Endothelial cell of umbilical vein (primary cell): ENCODE measurements at regions of chr12 and their contacts with region 1.

Region 1: DNA sequence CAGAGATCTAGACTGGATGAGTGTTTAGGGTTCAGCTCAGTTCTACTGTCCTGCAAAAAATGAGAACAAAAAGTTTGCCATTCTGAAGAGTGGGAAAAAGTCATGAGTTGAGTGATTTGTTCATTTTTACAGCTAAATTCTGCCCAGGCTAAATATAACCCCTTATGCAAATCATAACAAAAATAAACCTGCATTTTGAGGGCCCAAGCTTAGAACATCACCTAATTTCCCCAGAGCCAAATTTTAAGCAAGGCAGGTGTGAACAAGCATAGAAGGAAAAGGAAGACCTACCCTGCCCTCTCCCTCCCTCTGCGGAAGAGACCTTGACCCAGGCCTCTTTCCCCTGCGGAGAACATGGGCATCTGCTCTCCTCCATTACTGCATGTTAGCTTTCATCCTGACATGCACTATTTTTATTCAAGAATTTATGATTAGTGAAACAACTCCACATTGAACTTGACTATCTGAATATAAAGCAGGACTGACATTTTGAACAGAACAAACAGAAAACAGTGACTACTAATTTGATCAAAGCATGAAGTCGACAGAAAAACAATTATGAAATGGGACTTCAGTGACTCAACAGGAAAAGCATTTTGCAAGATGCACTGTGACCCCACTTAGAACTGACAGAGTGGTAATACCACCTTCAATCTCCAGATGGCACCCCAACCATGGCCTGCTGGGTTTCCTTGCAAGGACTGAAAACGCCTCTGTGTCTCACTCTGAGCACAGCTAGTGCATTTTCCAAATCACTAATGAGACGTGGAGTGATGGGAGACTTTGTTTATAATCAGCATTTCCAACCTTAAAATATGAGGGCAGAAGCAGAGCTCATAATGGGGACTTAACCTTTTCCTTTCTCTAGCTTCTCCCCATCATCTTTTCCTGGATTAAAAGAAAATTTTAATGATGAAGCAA is 30.9 kb upstream of the SELPLG start:
- DNase-seq: peak; percentile 99
- H3K4me3 ChIP-seq: peak overlapping the region in 1 of 3 experiments; percentile 45
- H3K27ac ChIP-seq: peak overlapping the region; percentile 82
- H3K4me1 ChIP-seq: peaks cover 20% of the 10 kb centered on the region
- H3K27me3 ChIP-seq: no peaks in the 10 kb centered on the region
- CTCF ChIP-seq: peak; percentile 84 to 93
- POLR2A ChIP-seq: no peak

Region 2: DNA sequence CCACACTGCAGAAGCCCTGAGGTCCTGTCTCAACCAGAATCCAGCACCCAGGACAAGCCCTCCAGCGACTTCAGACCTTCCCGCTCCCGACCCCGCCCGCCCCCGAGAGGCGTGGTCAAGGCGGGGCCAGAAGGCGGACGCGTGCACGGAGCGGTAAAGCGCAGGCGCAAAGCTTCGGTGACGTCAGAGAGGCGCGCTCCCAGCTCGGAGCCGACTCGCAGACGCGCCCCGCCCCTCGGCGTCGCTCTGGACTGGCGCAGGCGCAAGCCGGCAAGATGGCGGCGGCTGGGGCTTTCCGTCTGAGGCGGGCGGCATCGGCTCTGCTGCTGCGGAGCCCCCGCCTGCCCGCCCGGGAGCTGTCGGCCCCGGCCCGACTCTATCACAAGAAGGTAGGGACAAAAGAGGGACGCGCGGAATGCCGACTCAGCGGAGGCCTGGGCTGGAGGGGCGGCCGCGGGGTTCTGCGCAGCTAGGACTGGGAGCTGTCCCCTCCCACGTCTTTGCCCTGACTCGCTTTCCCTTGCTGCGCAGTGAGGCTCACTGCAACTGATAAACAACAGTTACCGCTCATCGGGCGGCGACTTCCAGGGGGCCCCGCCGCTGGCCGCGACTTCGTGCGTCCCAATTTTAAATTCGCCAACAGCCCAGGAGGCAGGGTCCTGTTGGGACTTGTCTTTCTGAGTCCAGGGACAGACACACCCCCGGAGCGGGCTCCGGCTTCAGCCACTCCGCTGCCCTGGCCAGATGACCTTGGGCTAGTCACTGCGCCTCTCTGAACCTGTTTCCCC is 102.1 kb before region 1 on chr12 and contains the start of gene ISCU:
- CTCF ChIA-PET with region 1: interaction called, 5 read pairs
- POLR2A ChIA-PET with region 1: no interaction called
- dilution Hi-C with region 1: no loop called
- intact Hi-C with region 1: loop called (anchors 1 kb)
- DNase-seq: peak; percentile 96
- H3K4me3 ChIP-seq: peak within 1 kb of the TSS; percentile 78 to 95 (median 86)
- H3K27ac ChIP-seq: peak within 1 kb of the TSS; percentile 83
- H3K4me1 ChIP-seq: peaks cover 34% of the 10 kb centered on the region
- H3K27me3 ChIP-seq: no peaks in the 10 kb centered on the region
- CTCF ChIP-seq: no peak
- POLR2A ChIP-seq: peak; percentile 94
- total RNA-seq, gene ISCU: 74.8 and 75.0 TPM in 2 replicates

Region 3: DNA sequence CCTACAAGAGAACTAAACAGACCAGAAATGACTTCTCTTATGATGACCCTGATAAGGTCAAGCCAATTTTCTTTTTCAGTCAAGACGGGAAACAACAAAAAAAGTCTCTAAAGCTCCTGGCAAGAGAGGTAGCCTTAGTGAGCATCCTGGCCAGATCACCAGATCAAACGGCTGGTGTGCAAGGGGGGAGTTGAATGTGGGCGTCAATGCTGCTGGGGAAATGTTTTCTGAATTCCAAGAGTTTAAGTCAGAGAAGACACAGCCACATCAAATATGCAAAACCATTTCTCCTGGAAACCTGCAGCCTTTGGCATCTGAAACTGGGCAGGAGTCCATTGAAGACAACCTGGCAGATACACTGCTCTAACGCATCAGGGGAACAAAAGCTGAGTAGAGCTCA is 14.9 kb before region 1 on chr12:
- CTCF ChIA-PET with region 1: interaction called, 16 read pairs
- POLR2A ChIA-PET with region 1: no interaction called
- dilution Hi-C with region 1: no loop called
- intact Hi-C with region 1: loop called (anchors 2 kb)
- DNase-seq: peak; percentile 76
- H3K4me3 ChIP-seq: no peak overlapping the region
- H3K27ac ChIP-seq: peak overlapping the region; percentile 14
- H3K4me1 ChIP-seq: peaks cover 48% of the 10 kb centered on the region
- H3K27me3 ChIP-seq: no peaks in the 10 kb centered on the region
- CTCF ChIP-seq: no peak
- POLR2A ChIP-seq: no peak

Region 4: DNA sequence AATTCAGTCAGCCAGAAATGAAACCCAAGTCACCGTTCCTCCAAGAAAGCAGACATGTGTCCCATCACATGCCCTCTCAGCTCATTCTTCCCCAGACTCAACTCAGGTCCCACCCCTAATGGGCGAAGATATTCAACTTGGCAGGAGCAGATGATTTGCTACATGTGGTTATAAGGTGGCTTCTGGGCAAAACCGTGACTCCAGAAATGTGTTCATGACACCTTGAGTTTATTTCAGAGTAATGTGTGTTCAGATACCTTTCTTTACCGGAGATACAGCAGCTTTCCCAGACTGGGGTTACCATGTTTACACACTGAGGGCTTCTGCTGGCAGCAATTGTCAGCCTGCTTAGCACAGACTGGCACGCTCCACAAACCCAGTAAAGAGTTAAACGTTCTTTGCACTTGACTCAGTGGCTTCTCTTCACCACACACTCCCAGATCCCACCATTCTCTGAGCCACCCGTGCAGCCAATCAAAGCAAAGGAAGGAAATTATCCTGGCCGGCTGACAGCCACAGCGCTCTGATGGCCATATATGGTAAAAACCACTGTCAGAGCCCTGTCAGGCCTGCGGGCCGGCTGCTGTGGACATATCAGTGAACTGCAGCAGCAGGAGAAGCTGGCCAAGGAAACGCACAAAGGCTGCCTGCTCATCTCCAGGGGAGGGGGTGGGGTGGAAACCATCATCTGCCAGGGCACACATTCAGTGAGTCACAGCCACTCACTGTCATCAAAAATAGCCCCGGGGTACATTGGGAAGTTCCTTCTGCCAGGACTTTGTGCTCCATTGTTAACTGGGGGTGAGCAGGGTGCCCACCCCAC is 26.8 kb after region 1 on chr12:
- CTCF ChIA-PET with region 1: interaction called, 59 read pairs
- POLR2A ChIA-PET with region 1: interaction called, 9 read pairs
- dilution Hi-C with region 1: no loop called
- intact Hi-C with region 1: loop called (anchors 1 kb)
- DNase-seq: peak; percentile 99
- H3K4me3 ChIP-seq: peak overlapping the region in 1 of 3 experiments; percentile 7
- H3K27ac ChIP-seq: peak overlapping the region; percentile 89
- H3K4me1 ChIP-seq: peaks cover 49% of the 10 kb centered on the region
- H3K27me3 ChIP-seq: no peaks in the 10 kb centered on the region
- CTCF ChIP-seq: peak in 1 of 2 donors; percentile 31
- POLR2A ChIP-seq: peak; percentile 56

Region 5: GRCh38 chr12:108826101-108826806 is 161.7 kb after region 1 on chr12:
- CTCF ChIA-PET with region 1: interaction called, 10 read pairs
- POLR2A ChIA-PET with region 1: no interaction called
- dilution Hi-C with region 1: loop called (anchors 25 kb)
- intact Hi-C with region 1: no loop called
- DNase-seq: peak; percentile 98
- H3K4me3 ChIP-seq: peak overlapping the region in 1 of 3 experiments; percentile 49
- H3K27ac ChIP-seq: peak overlapping the region; percentile 100
- H3K4me1 ChIP-seq: peaks cover 71% of the 10 kb centered on the region
- H3K27me3 ChIP-seq: no peaks in the 10 kb centered on the region
- CTCF ChIP-seq: peak in 1 of 2 donors; percentile 23
- POLR2A ChIP-seq: peak; percentile 31

Region 6: DNA sequence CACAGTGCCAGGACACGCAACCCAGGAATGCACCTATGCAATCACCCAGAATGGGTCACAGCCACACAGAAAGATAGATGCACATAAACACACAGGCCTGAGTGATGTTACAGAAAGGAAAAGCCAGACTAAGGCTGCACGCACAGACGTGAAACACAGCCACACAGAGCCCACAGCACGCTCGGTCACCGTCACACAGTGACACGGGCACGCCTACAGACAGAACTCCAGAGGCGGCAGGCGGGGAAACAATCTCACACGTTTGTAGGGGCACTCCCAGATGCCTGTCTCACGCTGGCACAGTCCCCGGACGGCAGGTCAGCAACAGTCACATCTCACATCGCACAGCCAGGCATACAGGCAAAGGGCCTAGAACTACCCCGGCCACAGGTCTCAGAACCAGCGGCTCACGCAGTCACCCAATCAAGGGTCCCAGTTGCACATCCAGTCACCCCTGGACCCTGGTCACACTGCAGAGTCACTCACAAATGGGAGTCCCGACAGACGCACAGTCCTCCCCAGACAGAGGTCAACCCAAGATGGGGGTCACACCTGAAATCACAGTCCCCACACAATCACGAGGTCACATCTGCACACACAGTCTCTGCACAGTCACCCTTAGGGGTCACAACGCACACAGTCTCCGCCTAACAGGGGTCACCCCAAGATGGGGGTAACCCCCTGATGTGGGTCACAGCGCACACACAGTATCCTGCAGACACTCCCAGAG is 192.0 kb after region 1 on chr12:
- CTCF ChIA-PET with region 1: interaction called, 11 read pairs
- POLR2A ChIA-PET with region 1: no interaction called
- dilution Hi-C with region 1: no loop called
- intact Hi-C with region 1: loop called (anchors 1 kb)
- DNase-seq: peak; percentile 49
- H3K4me3 ChIP-seq: peak overlapping the region; percentile 0 to 74 (median 60)
- H3K27ac ChIP-seq: peak overlapping the region; percentile 98
- H3K4me1 ChIP-seq: peaks cover 46% of the 10 kb centered on the region
- H3K27me3 ChIP-seq: no peaks in the 10 kb centered on the region
- CTCF ChIP-seq: no peak
- POLR2A ChIP-seq: peak; percentile 22